ENCODE measurements at regions of chr5 and their contacts with region 1.

Region 1: DNA sequence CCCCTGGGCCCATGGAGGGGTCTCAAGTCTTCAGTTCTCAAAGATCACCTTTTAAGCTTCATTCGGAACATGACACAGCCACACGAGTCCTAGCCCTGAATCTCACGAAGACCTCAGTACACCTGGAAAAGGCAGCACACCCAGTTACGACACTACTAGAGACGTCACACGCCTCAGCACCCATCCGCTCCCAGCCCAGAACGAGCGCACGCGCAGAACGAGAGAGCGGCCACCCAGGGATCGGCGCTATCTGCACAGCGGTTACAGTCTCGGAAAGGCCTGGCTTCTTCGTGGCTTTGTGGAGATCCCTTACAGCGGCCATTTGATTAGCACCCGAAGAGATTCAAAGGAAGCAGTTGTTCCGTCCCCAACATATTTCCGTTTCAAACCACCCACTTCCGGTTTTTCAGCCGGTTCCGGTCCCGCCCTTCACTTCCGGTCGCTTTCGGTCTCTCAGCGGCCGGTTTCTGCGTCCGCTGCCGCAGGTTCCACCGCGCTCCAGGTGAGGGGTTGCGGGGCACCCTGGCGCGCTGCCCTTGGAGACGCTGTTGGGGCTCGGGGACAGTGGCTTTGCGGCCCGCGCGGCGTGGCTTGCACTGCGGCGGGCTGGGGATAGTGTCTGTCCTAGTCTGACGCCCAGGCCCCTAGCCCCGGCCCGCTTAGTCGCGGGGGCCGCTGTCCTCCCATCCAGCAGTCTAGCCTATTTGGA is at the start of gene UBLCP1:
- DNase-seq: peak; percentile 92
- H3K4me3 Mint-ChIP-seq: peak within 1 kb of the TSS; percentile 83
- H3K27ac Mint-ChIP-seq: peak within 1 kb of the TSS; percentile 97
- H3K4me1 Mint-ChIP-seq: peaks cover 24% of the 10 kb centered on the region
- H3K27me3 Mint-ChIP-seq: no peaks in the 10 kb centered on the region
- CTCF ChIP-seq: no peak
- total RNA-seq, gene UBLCP1: 74.4 and 89.6 TPM in 2 replicates

Region 2: DNA sequence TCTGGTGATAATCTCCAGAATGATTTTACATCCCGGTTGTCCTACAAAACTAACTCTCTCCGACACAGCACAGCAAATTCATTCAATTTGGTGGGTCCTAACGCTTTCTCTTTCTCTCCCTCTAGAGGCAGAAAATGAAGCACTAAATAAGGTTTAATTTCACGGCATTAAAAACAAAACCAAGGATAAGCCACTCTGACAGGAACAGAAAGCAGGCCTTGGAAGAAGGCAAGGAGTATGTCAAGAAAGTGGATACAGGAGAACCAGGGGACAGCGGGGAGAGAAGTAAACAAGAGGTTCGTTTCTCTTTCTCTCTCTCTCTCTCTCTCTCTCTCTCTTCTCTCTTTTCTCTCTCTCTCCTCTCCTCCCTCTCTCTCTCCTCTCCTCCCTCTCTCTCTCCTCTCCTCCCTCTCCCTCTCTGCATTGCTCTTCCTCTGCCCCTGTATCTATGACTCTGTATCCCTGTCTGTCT is 213.1 kb before region 1 on chr5:
- CTCF ChIA-PET with region 1: no interaction called
- POLR2A ChIA-PET with region 1: no interaction called
- intact Hi-C with region 1: no loop called
- DNase-seq: peak; percentile 40
- H3K4me3 Mint-ChIP-seq: no peak overlapping the region
- H3K27ac Mint-ChIP-seq: no peak overlapping the region
- H3K4me1 Mint-ChIP-seq: peaks cover 12% of the 10 kb centered on the region
- H3K27me3 Mint-ChIP-seq: peaks cover 15% of the 10 kb centered on the region
- CTCF ChIP-seq: peak; percentile 27

Region 3: GRCh38 chr5:159163027-159163700 is 99.8 kb before region 1 on chr5:
- CTCF ChIA-PET with region 1: interaction called, 3 read pairs
- POLR2A ChIA-PET with region 1: interaction called, 18 read pairs
- intact Hi-C with region 1: no loop called
- DNase-seq: peak; percentile 78
- H3K4me3 Mint-ChIP-seq: peak overlapping the region; percentile 3
- H3K27ac Mint-ChIP-seq: peak overlapping the region; percentile 69
- H3K4me1 Mint-ChIP-seq: peaks cover 27% of the 10 kb centered on the region
- H3K27me3 Mint-ChIP-seq: no peaks in the 10 kb centered on the region
- CTCF ChIP-seq: no peak

Region 4: GRCh38 chr5:159184858-159185381 is 78.1 kb before region 1 on chr5:
- CTCF ChIA-PET with region 1: no interaction called
- POLR2A ChIA-PET with region 1: interaction called, 12 read pairs
- intact Hi-C with region 1: no loop called
- DNase-seq: peak; percentile 77
- H3K4me3 Mint-ChIP-seq: peak overlapping the region; percentile 48
- H3K27ac Mint-ChIP-seq: peak overlapping the region; percentile 96
- H3K4me1 Mint-ChIP-seq: peaks cover 81% of the 10 kb centered on the region
- H3K27me3 Mint-ChIP-seq: no peaks in the 10 kb centered on the region
- CTCF ChIP-seq: no peak

Region 5: GRCh38 chr5:159218595-159219023 is 44.4 kb before region 1 on chr5:
- CTCF ChIA-PET with region 1: interaction called, 4 read pairs
- POLR2A ChIA-PET with region 1: interaction called, 36 read pairs
- intact Hi-C with region 1: no loop called
- DNase-seq: peak; percentile 36
- H3K4me3 Mint-ChIP-seq: no peak overlapping the region
- H3K27ac Mint-ChIP-seq: peak overlapping the region; percentile 35
- H3K4me1 Mint-ChIP-seq: peaks cover 59% of the 10 kb centered on the region
- H3K27me3 Mint-ChIP-seq: no peaks in the 10 kb centered on the region
- CTCF ChIP-seq: no peak

Region 6: DNA sequence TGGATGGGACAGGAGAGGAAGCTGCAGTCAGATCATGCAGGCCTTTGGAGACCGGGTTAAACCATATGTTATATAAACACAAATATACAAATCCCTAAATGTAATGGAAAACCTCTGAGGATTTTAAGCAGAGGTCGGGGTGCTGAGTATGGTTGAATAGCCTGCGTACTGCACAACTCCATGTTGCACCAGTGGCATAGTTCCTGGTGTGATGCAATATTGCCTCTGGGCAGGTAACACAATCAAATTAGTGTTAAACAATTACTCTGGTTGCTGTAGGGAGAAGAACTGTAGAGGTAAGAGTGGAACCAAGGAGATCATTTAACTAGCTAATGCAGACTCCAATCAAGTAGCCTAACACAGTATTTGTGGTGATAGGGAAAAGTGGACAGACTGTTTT is 32.4 kb before region 1 on chr5:
- CTCF ChIA-PET with region 1: interaction called, 4 read pairs
- POLR2A ChIA-PET with region 1: interaction called, 35 read pairs
- intact Hi-C with region 1: loop called (anchors 5 kb)
- DNase-seq: peak; percentile 89
- H3K4me3 Mint-ChIP-seq: peak overlapping the region; percentile 22
- H3K27ac Mint-ChIP-seq: peak overlapping the region; percentile 5
- H3K4me1 Mint-ChIP-seq: peaks cover 44% of the 10 kb centered on the region
- H3K27me3 Mint-ChIP-seq: no peaks in the 10 kb centered on the region
- CTCF ChIP-seq: no peak

Region 7: GRCh38 chr5:159274676-159275075 is 11.7 kb after region 1 on chr5:
- CTCF ChIA-PET with region 1: interaction called, 7 read pairs
- POLR2A ChIA-PET with region 1: interaction called, 22 read pairs
- intact Hi-C with region 1: no loop called
- DNase-seq: no peak
- H3K4me3 Mint-ChIP-seq: peak overlapping the region; percentile 19
- H3K27ac Mint-ChIP-seq: peak overlapping the region; percentile 79
- H3K4me1 Mint-ChIP-seq: peaks cover 8% of the 10 kb centered on the region
- H3K27me3 Mint-ChIP-seq: no peaks in the 10 kb centered on the region
- CTCF ChIP-seq: no peak

Measured in MCF 10A (cell line).